Caco-2 (cell line): ENCODE measurements at regions of chr18 and their contacts with region 1.

Region 1: GRCh38 chr18:3380384-3380961 is 69.5 kb upstream of the TGIF1 start:
- DNase-seq: no peak
- H3K4me3 ChIP-seq: no peak overlapping the region
- H3K4me3 Mint-ChIP-seq: no peak overlapping the region
- H3K27ac Mint-ChIP-seq: no peak overlapping the region
- H3K4me1 ChIP-seq: peaks cover 15% of the 10 kb centered on the region
- H3K4me1 Mint-ChIP-seq: peaks cover 13% of the 10 kb centered on the region
- H3K27me3 ChIP-seq: no peaks in the 10 kb centered on the region
- H3K27me3 Mint-ChIP-seq: no peaks in the 10 kb centered on the region
- CTCF ChIP-seq: no peak

Region 2: DNA sequence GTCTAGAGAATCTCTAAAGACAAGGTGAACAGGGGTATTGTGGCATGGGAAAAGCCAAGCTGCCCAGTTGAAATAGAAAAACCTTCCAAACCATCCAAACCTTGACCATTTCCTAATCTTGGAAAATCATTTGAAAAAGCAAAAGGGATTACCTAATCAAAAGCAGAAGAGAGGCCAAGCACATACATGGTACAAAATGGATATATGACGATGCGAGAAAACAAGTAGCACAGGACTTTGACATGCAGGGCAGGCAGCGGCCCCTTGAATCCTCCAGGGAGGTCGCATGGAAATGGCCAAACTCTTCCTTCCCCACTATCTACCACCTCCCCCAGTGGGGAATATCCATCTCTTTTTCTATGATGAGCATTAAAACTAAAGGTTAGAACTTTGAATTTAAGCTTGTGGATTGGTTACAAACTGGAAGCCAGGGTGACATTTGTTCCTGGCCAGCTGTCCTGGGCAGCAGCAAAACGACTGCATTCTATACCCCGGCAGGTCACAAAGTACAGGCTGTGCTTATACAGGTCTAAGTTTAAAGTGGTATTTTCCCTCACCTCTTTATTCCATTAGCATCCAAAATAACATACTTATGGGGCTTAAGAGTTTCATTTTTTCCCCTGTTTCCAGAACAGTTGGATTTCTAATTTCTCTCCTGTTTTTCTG is 185.4 kb before region 1 on chr18:
- CTCF ChIA-PET with region 1: no interaction called
- POLR2A ChIA-PET with region 1: no interaction called
- intact Hi-C with region 1: no loop called
- DNase-seq: no peak
- H3K4me3 ChIP-seq: no peak overlapping the region
- H3K4me3 Mint-ChIP-seq: no peak overlapping the region
- H3K27ac Mint-ChIP-seq: no peak overlapping the region
- H3K4me1 ChIP-seq: no peaks in the 10 kb centered on the region
- H3K4me1 Mint-ChIP-seq: no peaks in the 10 kb centered on the region
- H3K27me3 ChIP-seq: no peaks in the 10 kb centered on the region
- H3K27me3 Mint-ChIP-seq: peaks cover 2% of the 10 kb centered on the region
- CTCF ChIP-seq: no peak

Region 3: GRCh38 chr18:3245853-3246634 is 134.4 kb before region 1 on chr18:
- CTCF ChIA-PET with region 1: no interaction called
- POLR2A ChIA-PET with region 1: no interaction called
- intact Hi-C with region 1: no loop called
- DNase-seq: peak; percentile 88 to 89
- H3K4me3 ChIP-seq: peak overlapping the region; percentile 47
- H3K4me3 Mint-ChIP-seq: peak overlapping the region; percentile 78
- H3K27ac Mint-ChIP-seq: peak overlapping the region; percentile 98
- H3K4me1 ChIP-seq: peaks cover 12% of the 10 kb centered on the region
- H3K4me1 Mint-ChIP-seq: peaks cover 22% of the 10 kb centered on the region
- H3K27me3 ChIP-seq: no peaks in the 10 kb centered on the region
- H3K27me3 Mint-ChIP-seq: no peaks in the 10 kb centered on the region
- CTCF ChIP-seq: peak; percentile 90 to 91

Region 4: DNA sequence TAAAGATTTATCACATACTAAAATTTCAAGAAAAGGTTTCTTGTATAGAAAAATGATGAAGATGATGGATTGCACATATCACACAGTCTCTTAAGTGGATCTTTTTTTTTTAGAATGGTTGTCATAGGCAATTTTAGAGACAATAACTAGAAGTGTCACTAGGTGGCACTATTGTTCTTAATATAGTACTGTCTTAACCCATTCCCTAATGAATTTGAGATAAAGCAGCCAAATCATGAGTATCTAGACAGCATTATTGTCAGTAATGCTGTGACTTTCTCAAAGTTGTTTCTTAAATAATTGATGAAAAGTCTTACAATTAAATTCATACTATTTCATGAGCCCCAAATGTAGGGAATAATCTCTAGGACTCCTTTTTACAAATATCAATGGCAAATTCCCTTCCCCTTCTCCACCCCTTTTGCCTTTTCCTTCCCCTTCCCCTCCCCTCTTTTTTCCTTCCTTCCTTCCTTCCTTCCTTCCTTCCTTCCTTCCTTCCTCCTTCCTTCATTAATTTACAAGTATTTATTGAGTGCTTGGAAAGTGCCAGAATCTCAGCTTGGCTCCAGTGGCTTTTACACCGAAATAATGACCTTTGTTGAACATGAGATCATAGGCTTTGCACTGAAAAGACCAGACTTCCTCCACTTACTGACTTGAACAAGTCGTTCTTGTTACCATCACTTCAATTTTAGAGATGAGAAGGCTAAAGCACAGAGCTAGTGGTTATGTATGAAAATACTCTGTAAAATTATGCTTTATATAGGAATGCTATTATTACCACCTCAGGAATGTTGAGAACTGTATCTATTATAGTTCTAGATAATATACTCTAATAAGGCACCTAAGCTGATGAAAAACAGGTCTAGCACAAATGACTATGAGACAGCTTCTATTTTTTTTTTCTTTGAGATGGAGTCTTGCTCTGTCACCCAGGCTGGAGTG is 98.7 kb before region 1 on chr18:
- CTCF ChIA-PET with region 1: no interaction called
- POLR2A ChIA-PET with region 1: no interaction called
- intact Hi-C with region 1: loop called (anchors 5 kb)
- DNase-seq: peak in 1 of 2 experiments; percentile 78
- H3K4me3 ChIP-seq: no peak overlapping the region
- H3K4me3 Mint-ChIP-seq: no peak overlapping the region
- H3K27ac Mint-ChIP-seq: no peak overlapping the region
- H3K4me1 ChIP-seq: no peaks in the 10 kb centered on the region
- H3K4me1 Mint-ChIP-seq: peaks cover 13% of the 10 kb centered on the region
- H3K27me3 ChIP-seq: no peaks in the 10 kb centered on the region
- H3K27me3 Mint-ChIP-seq: no peaks in the 10 kb centered on the region
- CTCF ChIP-seq: peak; percentile 33 to 66

Region 5: DNA sequence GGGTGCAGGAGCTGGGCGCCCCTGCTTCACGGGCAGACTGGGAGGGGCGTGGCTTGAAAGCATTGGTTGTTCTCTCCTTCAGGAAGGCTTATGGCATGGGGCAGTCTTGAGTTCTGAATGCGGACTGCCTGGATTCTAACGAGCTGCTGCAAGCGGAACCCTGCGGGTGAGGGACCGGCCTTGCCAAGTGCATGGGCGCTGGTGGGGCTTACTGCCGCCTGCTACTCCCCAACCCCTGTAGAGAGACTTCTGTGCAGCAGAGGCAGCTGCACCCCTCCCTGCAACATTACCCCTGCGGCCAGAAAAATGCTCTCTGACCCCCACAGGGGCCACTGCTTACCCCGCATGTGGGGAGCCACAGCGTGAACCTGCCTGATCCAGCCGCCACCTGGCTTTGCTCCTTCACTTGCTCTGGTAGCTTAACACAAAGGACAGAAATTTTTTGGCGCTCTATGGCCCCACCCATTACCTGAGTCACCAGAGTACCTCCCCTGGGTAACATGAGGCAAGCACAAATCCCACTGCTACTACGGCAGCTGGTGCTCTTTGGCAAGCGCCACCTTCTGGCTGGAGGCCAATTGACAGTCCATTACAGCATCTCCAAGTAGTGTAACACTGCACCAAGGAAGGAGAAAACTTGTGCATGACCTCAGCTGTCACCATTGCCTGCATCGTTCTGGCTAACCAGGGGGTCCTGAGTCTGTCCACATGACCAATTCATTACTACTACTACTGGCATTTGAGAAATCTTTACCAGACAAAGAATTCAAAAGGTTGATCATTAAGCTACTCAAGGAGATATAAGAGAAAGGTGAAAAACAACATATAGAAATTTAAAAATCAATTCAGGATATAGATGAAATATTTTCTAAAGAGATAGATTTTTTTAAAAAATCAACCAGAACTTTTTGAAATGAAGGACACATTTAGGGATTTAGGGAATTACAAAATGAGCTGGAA is 83.2 kb before region 1 on chr18:
- CTCF ChIA-PET with region 1: interaction called, 3 read pairs
- POLR2A ChIA-PET with region 1: interaction called, 8 read pairs
- intact Hi-C with region 1: loop called (anchors 1 kb)
- DNase-seq: peak; percentile 94 to 95
- H3K4me3 ChIP-seq: peak overlapping the region; percentile 70
- H3K4me3 Mint-ChIP-seq: peak overlapping the region; percentile 93
- H3K27ac Mint-ChIP-seq: peak overlapping the region; percentile 89
- H3K4me1 ChIP-seq: no peaks in the 10 kb centered on the region
- H3K4me1 Mint-ChIP-seq: peaks cover 7% of the 10 kb centered on the region
- H3K27me3 ChIP-seq: no peaks in the 10 kb centered on the region
- H3K27me3 Mint-ChIP-seq: peaks cover 4% of the 10 kb centered on the region
- CTCF ChIP-seq: peak; percentile 87 to 94

Region 6: GRCh38 chr18:3329471-3329870 is 51.0 kb before region 1 on chr18:
- CTCF ChIA-PET with region 1: no interaction called
- POLR2A ChIA-PET with region 1: no interaction called
- intact Hi-C with region 1: loop called (anchors 1 kb)
- DNase-seq: peak in 1 of 2 experiments; percentile 67
- H3K4me3 ChIP-seq: no peak overlapping the region
- H3K4me3 Mint-ChIP-seq: peak overlapping the region; percentile 55
- H3K27ac Mint-ChIP-seq: peak overlapping the region; percentile 88
- H3K4me1 ChIP-seq: peaks cover 26% of the 10 kb centered on the region
- H3K4me1 Mint-ChIP-seq: peaks cover 28% of the 10 kb centered on the region
- H3K27me3 ChIP-seq: no peaks in the 10 kb centered on the region
- H3K27me3 Mint-ChIP-seq: no peaks in the 10 kb centered on the region
- CTCF ChIP-seq: no peak

Region 7: DNA sequence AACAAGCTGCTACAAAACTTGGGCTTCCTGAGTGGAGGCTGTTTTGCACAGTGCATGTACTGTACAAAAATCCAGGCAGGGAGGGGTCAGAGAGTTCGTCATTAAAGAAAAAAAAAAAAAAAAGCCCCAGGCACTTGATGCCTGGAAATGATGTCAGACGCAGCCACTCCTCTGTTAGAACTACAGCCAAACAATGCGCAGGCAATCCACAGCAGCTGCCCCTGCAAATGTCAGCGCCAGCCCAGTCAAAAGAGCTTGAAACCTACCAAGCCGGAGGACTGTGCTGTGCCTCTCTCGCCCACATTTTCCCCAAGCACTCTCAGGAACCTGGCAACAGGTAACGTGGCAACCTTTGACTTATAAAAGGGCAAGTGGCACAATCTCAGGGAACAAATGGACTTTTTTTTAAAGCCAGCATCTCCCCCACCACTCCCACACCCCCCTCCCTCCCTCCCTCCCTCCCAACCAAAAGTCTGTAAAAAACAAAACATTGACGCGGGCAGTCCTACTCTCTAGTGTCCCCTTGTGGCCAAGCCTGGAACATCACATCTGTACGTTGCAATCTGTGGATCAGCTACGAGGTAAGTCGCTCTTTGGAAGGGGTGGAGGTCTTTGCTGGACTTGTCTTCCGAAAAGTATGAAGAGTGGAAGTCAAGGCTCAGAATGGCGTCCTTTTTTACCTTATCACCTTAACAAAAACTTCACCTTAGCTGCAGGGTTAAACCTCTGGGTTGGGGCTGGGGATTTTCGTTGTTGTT is 213.6 kb after region 1 on chr18:
- CTCF ChIA-PET with region 1: no interaction called
- POLR2A ChIA-PET with region 1: no interaction called
- intact Hi-C with region 1: loop called (anchors 5 kb)
- DNase-seq: peak; percentile 89 to 90
- H3K4me3 ChIP-seq: peak overlapping the region; percentile 39
- H3K4me3 Mint-ChIP-seq: peak overlapping the region; percentile 85
- H3K27ac Mint-ChIP-seq: peak overlapping the region; percentile 87
- H3K4me1 ChIP-seq: peaks cover 47% of the 10 kb centered on the region
- H3K4me1 Mint-ChIP-seq: peaks cover 47% of the 10 kb centered on the region
- H3K27me3 ChIP-seq: no peaks in the 10 kb centered on the region
- H3K27me3 Mint-ChIP-seq: no peaks in the 10 kb centered on the region
- CTCF ChIP-seq: peak; percentile 85 to 93

Region 8: GRCh38 chr18:3931542-3932112 is 551.2 kb after region 1 on chr18:
- CTCF ChIA-PET with region 1: no interaction called
- POLR2A ChIA-PET with region 1: no interaction called
- intact Hi-C with region 1: no loop called
- DNase-seq: no peak
- H3K4me3 ChIP-seq: no peak overlapping the region
- H3K4me3 Mint-ChIP-seq: no peak overlapping the region
- H3K27ac Mint-ChIP-seq: no peak overlapping the region
- H3K4me1 ChIP-seq: no peaks in the 10 kb centered on the region
- H3K4me1 Mint-ChIP-seq: no peaks in the 10 kb centered on the region
- H3K27me3 ChIP-seq: no peaks in the 10 kb centered on the region
- H3K27me3 Mint-ChIP-seq: no peaks in the 10 kb centered on the region
- CTCF ChIP-seq: no peak